Naive thymus-derived CD8-positive, alpha-beta T cell (primary cell): ENCODE measurements at regions of chr4 and their contacts with region 1.

Region 1: GRCh38 chr4:83110223-83110945 is 4.1 kb downstream of the PLAC8 start:
- DNase-seq: peak; percentile 77 to 93 (median 88)
- ATAC-seq: peak; percentile 76
- H3K4me3 Mint-ChIP-seq: peak overlapping the region; percentile 90 to 100 (median 97)
- H3K27ac Mint-ChIP-seq: peak overlapping the region; percentile 90 to 99 (median 98)
- H3K4me1 Mint-ChIP-seq: peaks cover 18 to 57% (median 44%) of the 10 kb centered on the region in 4 donors
- H3K27me3 Mint-ChIP-seq: no peaks in the 10 kb centered on the region

Region 2: GRCh38 chr4:82957045-82957444 is 153.3 kb before region 1 on chr4:
- POLR2A ChIA-PET with region 1: no interaction called
- DNase-seq: no peak
- ATAC-seq: no peak
- H3K4me3 Mint-ChIP-seq: no peak overlapping the region
- H3K27ac Mint-ChIP-seq: peak overlapping the region in 3 of 10 donors; percentile 26 to 59 (median 26)
- H3K4me1 Mint-ChIP-seq: peaks cover 2 to 14% (median 7%) of the 10 kb centered on the region in 4 donors
- H3K27me3 Mint-ChIP-seq: no peaks in the 10 kb centered on the region

Region 3: DNA sequence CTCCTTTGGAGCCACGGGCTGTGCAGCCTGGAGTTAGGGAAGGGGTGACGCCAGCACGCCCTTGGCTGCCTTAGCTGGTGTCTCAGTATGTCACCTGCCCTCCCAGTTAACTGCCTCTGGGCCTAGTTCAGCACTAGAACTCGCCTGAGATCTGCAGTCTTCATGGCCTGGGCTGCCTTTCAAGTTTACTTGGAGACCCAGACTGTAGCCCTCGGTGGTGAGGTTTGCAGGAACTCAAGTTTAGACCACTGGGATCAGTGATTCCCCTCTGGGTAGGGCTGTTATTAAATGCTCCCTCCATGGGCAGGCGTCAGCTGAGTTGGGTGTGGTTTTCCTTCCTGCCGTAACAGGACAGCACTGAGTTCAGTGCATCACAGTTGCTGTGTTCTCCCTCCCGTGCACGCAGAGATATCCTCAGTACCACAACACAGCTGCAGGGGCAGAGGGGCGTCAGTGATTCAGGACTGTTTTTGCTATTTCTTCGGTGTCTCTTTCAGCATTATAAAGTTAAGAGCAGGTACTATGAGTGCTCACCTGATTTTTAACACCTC is 26.4 kb before region 1 on chr4:
- POLR2A ChIA-PET with region 1: interaction called, 109 read pairs
- DNase-seq: peak; percentile 35 to 90 (median 75)
- ATAC-seq: peak; percentile 97 to 99
- H3K4me3 Mint-ChIP-seq: peak overlapping the region; percentile 20 to 87 (median 62)
- H3K27ac Mint-ChIP-seq: peak overlapping the region; percentile 94 to 99 (median 98)
- H3K4me1 Mint-ChIP-seq: peaks cover 26 to 60% (median 44%) of the 10 kb centered on the region in 4 donors
- H3K27me3 Mint-ChIP-seq: no peaks in the 10 kb centered on the region

Region 4: GRCh38 chr4:83124111-83124780 is 13.9 kb after region 1 on chr4:
- POLR2A ChIA-PET with region 1: interaction called, 16 read pairs
- DNase-seq: no peak
- ATAC-seq: no peak
- H3K4me3 Mint-ChIP-seq: peak overlapping the region in 2 of 10 donors; percentile 5 to 51
- H3K27ac Mint-ChIP-seq: peak overlapping the region in 2 of 10 donors; percentile 24 to 36
- H3K4me1 Mint-ChIP-seq: peaks cover 5 to 49% (median 24%) of the 10 kb centered on the region in 4 donors
- H3K27me3 Mint-ChIP-seq: no peaks in the 10 kb centered on the region

Region 5: GRCh38 chr4:83146841-83147240 is 36.5 kb after region 1 on chr4:
- POLR2A ChIA-PET with region 1: interaction called, 26 read pairs
- DNase-seq: no peak
- ATAC-seq: no peak
- H3K4me3 Mint-ChIP-seq: no peak overlapping the region
- H3K27ac Mint-ChIP-seq: peak overlapping the region in 1 of 10 donors; percentile 13
- H3K4me1 Mint-ChIP-seq: peaks cover 14 to 54% (median 25%) of the 10 kb centered on the region in 4 donors
- H3K27me3 Mint-ChIP-seq: no peaks in the 10 kb centered on the region

Region 6: DNA sequence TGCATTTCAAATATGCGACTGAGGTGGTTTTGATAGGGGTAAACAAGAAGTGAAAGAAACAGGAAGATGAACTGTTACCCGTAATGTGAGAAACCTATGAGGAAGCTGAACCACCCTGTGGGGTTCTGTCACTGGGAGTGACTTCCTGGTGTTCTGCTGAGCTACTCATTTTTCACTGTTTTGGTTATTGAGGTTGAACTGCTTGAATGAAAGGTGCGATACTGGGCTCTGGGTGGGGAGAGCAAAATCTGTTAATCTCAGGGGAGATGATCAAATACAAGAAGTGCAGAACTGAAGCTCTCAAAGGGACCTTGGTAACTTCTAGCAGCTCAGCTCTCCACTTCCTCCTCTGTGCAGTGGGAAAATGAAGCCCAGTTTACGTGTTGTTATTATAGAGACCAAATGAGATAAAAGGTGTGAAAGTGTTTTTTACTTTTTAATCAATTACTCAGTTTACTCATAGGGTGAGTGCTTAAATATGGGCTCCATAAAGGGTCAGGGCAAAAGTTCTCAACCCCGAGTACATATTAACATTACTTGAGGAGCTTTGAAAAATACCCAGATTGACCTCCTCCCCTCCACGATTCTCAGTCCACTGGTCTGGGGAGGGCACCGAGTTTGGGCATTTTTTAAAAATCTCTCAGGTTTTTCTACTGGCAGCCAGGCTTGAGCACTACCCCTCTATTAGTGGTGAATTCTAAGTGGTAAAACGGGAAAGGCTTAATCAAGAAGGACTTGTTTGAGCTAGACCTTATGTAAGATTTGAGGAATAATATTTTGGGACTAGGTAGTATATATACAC is 107.5 kb after region 1 on chr4:
- POLR2A ChIA-PET with region 1: interaction called, 104 read pairs
- DNase-seq: peak; percentile 17 to 90 (median 74)
- ATAC-seq: peak; percentile 91 to 93
- H3K4me3 Mint-ChIP-seq: peak overlapping the region; percentile 26 to 89 (median 64)
- H3K27ac Mint-ChIP-seq: peak overlapping the region; percentile 88 to 97 (median 93)
- H3K4me1 Mint-ChIP-seq: peaks cover 31 to 97% (median 70%) of the 10 kb centered on the region in 4 donors
- H3K27me3 Mint-ChIP-seq: no peaks in the 10 kb centered on the region